Caco-2 (cell line): ENCODE measurements at regions of chr16 and their contacts with region 1.

Region 1: DNA sequence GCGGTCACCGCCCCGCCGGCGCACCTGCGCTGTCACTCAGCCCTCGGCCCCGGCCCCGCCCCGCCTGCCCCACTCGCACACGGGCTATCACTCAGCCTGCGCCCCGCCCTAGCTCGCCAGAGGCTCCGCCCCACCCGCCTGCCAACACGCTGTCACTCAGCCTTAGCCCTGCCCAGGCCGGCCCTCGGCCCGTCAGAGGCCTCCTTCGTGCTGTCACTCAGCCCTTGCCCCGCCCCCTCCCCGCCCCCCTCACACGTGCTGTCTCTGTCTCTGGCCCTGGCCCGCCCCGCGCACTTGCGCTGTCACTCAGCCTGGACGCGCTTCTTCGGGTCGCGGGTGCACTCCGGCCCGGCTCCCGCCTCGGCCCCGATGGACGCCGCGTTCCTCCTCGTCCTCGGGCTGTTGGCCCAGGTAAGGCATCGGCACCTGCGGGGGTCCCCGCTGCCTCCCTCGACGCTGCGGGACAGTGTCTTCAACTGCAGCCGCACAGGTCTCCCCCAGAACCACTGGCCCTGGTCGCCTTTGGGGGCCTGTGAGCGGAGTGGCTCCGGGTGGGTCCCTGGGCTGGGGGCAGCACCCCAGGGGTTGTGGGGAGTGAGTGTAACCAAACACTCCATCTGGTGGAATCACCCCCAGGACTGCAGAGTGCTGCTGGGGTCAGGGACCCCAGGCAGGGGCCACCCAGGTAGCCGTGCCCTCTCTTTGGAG is at the start of gene CDH15:
- DNase-seq: peak; percentile 98 to 99
- H3K4me3 ChIP-seq: peak within 1 kb of the TSS; percentile 39
- H3K4me3 Mint-ChIP-seq: peak within 1 kb of the TSS; percentile 74
- H3K27ac Mint-ChIP-seq: no peak within 1 kb of the TSS
- H3K4me1 ChIP-seq: peaks cover 24% of the 10 kb centered on the region
- H3K4me1 Mint-ChIP-seq: peaks cover 7% of the 10 kb centered on the region
- H3K27me3 ChIP-seq: peaks cover 5% of the 10 kb centered on the region
- H3K27me3 Mint-ChIP-seq: peaks cover 7% of the 10 kb centered on the region
- CTCF ChIP-seq: no peak
- total RNA-seq, gene CDH15: not detected in 2 replicates

Region 2: DNA sequence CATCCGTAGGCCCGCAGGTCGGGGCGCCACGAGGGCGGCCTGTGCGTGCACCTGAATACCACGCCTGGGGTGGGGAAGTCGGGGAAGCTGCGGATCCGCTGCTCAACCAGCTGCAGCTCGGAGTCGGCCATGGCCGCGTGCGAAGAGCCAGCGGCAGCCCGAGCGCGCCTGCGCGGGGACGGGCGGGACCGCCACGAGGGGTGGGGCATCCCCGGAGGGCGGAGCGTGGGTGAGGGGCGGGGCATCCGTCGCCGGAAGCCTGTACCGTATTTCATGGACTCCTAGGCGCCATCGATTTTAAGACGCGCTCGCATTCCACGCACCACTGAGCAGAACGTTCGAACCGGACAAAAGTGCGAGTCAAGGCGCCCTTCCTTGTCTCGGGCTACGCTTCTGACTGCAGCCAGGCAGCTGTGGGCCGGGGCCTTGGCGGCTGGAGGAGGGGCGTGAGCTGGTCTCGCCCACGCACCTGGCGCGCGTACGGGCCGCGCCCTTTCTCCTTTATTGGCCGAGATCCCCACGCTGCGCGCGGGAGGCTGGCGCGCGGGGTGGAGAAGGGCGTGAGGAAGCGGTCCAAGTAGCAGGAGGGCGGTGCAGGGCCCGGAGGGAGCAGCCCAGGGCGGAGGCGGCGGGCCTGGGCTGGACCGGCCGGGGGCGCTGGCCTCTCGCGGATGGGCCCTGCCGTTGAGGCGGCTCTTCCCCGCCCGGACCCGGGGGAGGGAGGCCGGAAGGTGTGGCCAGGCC is 359.7 kb before region 1 on chr16 and contains the start of gene APRT:
- CTCF ChIA-PET with region 1: no interaction called
- POLR2A ChIA-PET with region 1: no interaction called
- intact Hi-C with region 1: loop called (anchors 2 kb)
- DNase-seq: peak; percentile 97 to 99
- H3K4me3 ChIP-seq: peak within 1 kb of the TSS; percentile 96
- H3K4me3 Mint-ChIP-seq: peak within 1 kb of the TSS; percentile 97
- H3K27ac Mint-ChIP-seq: peak within 1 kb of the TSS; percentile 98
- H3K4me1 ChIP-seq: peaks cover 15% of the 10 kb centered on the region
- H3K4me1 Mint-ChIP-seq: no peaks in the 10 kb centered on the region
- H3K27me3 ChIP-seq: no peaks in the 10 kb centered on the region
- H3K27me3 Mint-ChIP-seq: no peaks in the 10 kb centered on the region
- CTCF ChIP-seq: peak in 1 of 2 experiments; percentile 19
- total RNA-seq, gene APRT: 251 and 268 TPM in 2 replicates

Region 3: GRCh38 chr16:88941913-88942909 is 229.4 kb before region 1 on chr16:
- CTCF ChIA-PET with region 1: no interaction called
- POLR2A ChIA-PET with region 1: no interaction called
- intact Hi-C with region 1: loop called (anchors 10 kb)
- DNase-seq: peak in 1 of 2 experiments; percentile 71
- H3K4me3 ChIP-seq: no peak overlapping the region
- H3K4me3 Mint-ChIP-seq: peak overlapping the region; percentile 58
- H3K27ac Mint-ChIP-seq: no peak overlapping the region
- H3K4me1 ChIP-seq: peaks cover 4% of the 10 kb centered on the region; the same call in 1 of the 2 replicates
- H3K4me1 Mint-ChIP-seq: no peaks in the 10 kb centered on the region
- H3K27me3 ChIP-seq: no peaks in the 10 kb centered on the region; the same call in none of the 2 replicates
- H3K27me3 Mint-ChIP-seq: peaks cover 27% of the 10 kb centered on the region
- CTCF ChIP-seq: peak; percentile 39 to 69

Region 4: GRCh38 chr16:89145188-89146161 is 26.1 kb before region 1 on chr16:
- CTCF ChIA-PET with region 1: no interaction called
- POLR2A ChIA-PET with region 1: no interaction called
- intact Hi-C with region 1: no loop called
- DNase-seq: no peak
- H3K4me3 ChIP-seq: no peak overlapping the region
- H3K4me3 Mint-ChIP-seq: no peak overlapping the region
- H3K27ac Mint-ChIP-seq: no peak overlapping the region
- H3K4me1 ChIP-seq: no peaks in the 10 kb centered on the region
- H3K4me1 Mint-ChIP-seq: no peaks in the 10 kb centered on the region
- H3K27me3 ChIP-seq: no peaks in the 10 kb centered on the region
- H3K27me3 Mint-ChIP-seq: no peaks in the 10 kb centered on the region
- CTCF ChIP-seq: no peak

Region 5: DNA sequence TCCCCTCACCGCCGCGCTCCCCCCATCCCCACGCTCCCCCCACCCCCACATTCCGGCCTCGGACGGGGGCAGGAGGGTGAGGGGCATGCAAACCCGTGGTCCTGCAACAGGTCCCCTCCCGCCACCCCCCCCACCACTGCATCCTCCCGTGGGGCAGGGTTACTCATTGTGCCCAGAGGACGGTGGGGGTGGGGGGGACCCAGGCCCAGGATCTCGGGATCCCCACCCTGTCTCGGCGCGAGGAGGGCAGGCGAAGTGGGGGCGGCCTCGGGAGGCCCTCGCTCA is 20.2 kb after region 1 on chr16:
- CTCF ChIA-PET with region 1: no interaction called
- POLR2A ChIA-PET with region 1: no interaction called
- intact Hi-C with region 1: loop called (anchors 1 kb)
- DNase-seq: no peak
- H3K4me3 ChIP-seq: peak overlapping the region; percentile 24
- H3K4me3 Mint-ChIP-seq: no peak overlapping the region
- H3K27ac Mint-ChIP-seq: no peak overlapping the region
- H3K4me1 ChIP-seq: peaks cover 4% of the 10 kb centered on the region; the same call in 1 of the 2 replicates
- H3K4me1 Mint-ChIP-seq: no peaks in the 10 kb centered on the region
- H3K27me3 ChIP-seq: no peaks in the 10 kb centered on the region
- H3K27me3 Mint-ChIP-seq: no peaks in the 10 kb centered on the region
- CTCF ChIP-seq: no peak

Region 6: GRCh38 chr16:89201439-89202377 is 30.1 kb after region 1 on chr16:
- CTCF ChIA-PET with region 1: no interaction called
- POLR2A ChIA-PET with region 1: no interaction called
- intact Hi-C with region 1: loop called (anchors 1 kb)
- DNase-seq: peak; percentile 94 to 96
- H3K4me3 ChIP-seq: peak overlapping the region; percentile 62
- H3K4me3 Mint-ChIP-seq: peak overlapping the region; percentile 73
- H3K27ac Mint-ChIP-seq: no peak overlapping the region
- H3K4me1 ChIP-seq: peaks cover 17% of the 10 kb centered on the region
- H3K4me1 Mint-ChIP-seq: peaks cover 8% of the 10 kb centered on the region
- H3K27me3 ChIP-seq: no peaks in the 10 kb centered on the region; the same call in 1 of the 2 replicates
- H3K27me3 Mint-ChIP-seq: peaks cover 12% of the 10 kb centered on the region
- CTCF ChIP-seq: no peak